ENCODE measurements at regions of chr1 and their contacts with region 1.

Region 1: DNA sequence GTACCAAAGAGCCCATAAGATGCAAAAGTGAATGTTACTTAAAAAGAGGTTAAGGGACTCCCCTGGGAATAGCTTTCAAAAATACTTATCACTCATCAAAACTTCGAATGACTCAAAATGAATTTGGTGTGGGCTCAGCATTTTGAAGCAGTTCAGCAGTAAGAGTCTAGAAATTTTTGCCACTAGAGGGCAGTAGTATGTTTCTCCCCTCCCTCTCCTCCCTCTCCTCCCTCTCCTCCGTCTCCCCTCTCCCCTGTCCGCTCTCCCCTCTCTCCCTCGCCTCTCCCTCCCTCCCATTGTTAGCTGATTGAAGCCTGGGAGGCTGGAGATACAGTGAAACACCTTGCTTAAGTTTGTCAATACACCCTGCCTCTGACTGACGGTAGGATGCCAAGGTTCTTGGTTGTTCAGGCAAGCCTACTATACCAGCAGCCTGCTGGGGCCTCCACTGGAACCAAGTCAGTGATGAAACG is 70.8 kb upstream of the TENT5C start:
- DNase-seq: peak; percentile 48
- ATAC-seq: peak; percentile 81
- H3K4me3 Mint-ChIP-seq: no peak overlapping the region
- H3K27ac Mint-ChIP-seq: no peak overlapping the region
- H3K4me1 Mint-ChIP-seq: peaks cover 25% of the 10 kb centered on the region
- H3K27me3 Mint-ChIP-seq: peaks cover 2% of the 10 kb centered on the region

Region 2: DNA sequence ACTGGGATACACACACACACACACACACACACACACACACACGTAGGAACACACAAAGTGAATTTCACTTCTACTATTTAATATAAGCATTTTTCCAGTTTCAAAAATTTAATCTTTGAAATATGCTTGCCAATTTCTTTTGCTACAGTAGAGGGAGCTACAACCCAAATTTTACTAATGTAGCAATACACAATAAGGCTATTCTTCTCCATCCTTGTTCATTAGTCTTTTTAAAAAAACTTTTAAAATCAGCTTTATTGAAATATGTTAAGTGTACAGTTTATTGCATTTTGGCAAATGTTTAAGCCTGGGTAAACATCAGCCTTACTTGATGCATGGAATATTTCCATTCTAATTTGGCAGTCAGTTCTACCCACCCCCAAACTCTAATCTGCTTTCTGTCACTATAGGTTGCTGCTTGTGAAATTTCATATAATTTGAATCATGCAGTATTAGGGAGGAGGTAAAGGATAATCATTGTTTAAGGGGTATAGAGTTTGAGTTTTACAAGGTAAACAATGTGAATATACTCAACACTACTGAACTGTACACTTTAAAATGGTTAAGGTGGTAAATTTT is 22.2 kb before region 1 on chr1:
- CTCF ChIA-PET with region 1: interaction called, 52 read pairs
- POLR2A ChIA-PET with region 1: no interaction called
- intact Hi-C with region 1: no loop called
- DNase-seq: no peak
- ATAC-seq: no peak
- H3K4me3 Mint-ChIP-seq: no peak overlapping the region
- H3K27ac Mint-ChIP-seq: no peak overlapping the region
- H3K4me1 Mint-ChIP-seq: peaks cover 3% of the 10 kb centered on the region
- H3K27me3 Mint-ChIP-seq: no peaks in the 10 kb centered on the region

Region 3: DNA sequence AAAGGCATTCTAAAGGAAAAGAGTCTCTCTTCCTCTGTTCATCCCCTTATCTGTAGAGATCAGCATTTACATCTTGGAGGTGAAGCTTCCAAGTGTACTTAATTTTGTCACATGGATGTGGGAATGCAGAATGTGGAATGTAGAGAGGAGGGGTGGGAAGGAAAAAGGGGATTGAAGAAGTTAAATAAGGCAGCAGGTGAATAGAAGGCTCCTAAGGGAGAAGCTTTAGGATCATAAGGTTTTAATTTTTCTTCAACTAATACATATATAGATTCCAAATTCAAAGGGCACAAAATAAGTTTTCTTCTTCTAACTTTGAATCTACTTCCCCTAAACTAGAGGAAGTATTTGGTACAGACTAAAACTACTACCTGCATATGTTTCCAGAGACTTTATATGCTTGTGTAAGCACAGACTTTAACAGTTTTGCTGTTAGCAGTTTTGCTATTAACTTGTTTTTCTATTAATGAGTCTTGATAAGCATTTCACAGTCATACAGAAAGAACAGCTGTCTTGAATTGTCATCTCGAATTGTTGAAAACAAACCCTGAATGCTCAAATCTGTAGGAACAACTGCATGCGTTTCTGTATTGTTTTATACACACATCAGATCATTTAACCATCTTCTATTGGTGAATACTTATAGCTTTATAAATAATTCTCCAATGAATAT is 83.6 kb after region 1 on chr1:
- CTCF ChIA-PET with region 1: interaction called, 4 read pairs
- POLR2A ChIA-PET with region 1: interaction called, 14 read pairs
- intact Hi-C with region 1: no loop called
- DNase-seq: no peak
- ATAC-seq: peak; percentile 65
- H3K4me3 Mint-ChIP-seq: no peak overlapping the region
- H3K27ac Mint-ChIP-seq: peak overlapping the region; percentile 10
- H3K4me1 Mint-ChIP-seq: peaks cover 60% of the 10 kb centered on the region
- H3K27me3 Mint-ChIP-seq: peaks cover 3% of the 10 kb centered on the region

Region 4: GRCh38 chr1:117654493-117655219 is 119.6 kb after region 1 on chr1:
- CTCF ChIA-PET with region 1: interaction called, 21 read pairs
- POLR2A ChIA-PET with region 1: interaction called, 6 read pairs
- intact Hi-C with region 1: no loop called
- DNase-seq: no peak
- ATAC-seq: peak; percentile 34
- H3K4me3 Mint-ChIP-seq: peak overlapping the region; percentile 16
- H3K27ac Mint-ChIP-seq: peak overlapping the region; percentile 79
- H3K4me1 Mint-ChIP-seq: peaks cover 78% of the 10 kb centered on the region
- H3K27me3 Mint-ChIP-seq: peaks cover 18% of the 10 kb centered on the region

Region 5: GRCh38 chr1:117674521-117675397 is 139.7 kb after region 1 on chr1:
- CTCF ChIA-PET with region 1: interaction called, 19 read pairs
- POLR2A ChIA-PET with region 1: no interaction called
- intact Hi-C with region 1: loop called in 1 of 2 experiments (anchors 2 kb)
- DNase-seq: peak; percentile 67
- ATAC-seq: peak; percentile 72
- H3K4me3 Mint-ChIP-seq: no peak overlapping the region
- H3K27ac Mint-ChIP-seq: no peak overlapping the region
- H3K4me1 Mint-ChIP-seq: peaks cover 16% of the 10 kb centered on the region
- H3K27me3 Mint-ChIP-seq: no peaks in the 10 kb centered on the region

Region 6: GRCh38 chr1:117735045-117735992 is 200.3 kb after region 1 on chr1:
- CTCF ChIA-PET with region 1: interaction called, 4 read pairs
- POLR2A ChIA-PET with region 1: no interaction called
- intact Hi-C with region 1: loop called in 1 of 2 experiments (anchors 5 kb)
- DNase-seq: peak; percentile 51
- ATAC-seq: peak; percentile 74
- H3K4me3 Mint-ChIP-seq: peak overlapping the region; percentile 54
- H3K27ac Mint-ChIP-seq: peak overlapping the region; percentile 93
- H3K4me1 Mint-ChIP-seq: peaks cover 4% of the 10 kb centered on the region
- H3K27me3 Mint-ChIP-seq: no peaks in the 10 kb centered on the region

Region 7: GRCh38 chr1:117895482-117896114 is 360.6 kb after region 1 on chr1:
- CTCF ChIA-PET with region 1: interaction called, 25 read pairs
- POLR2A ChIA-PET with region 1: no interaction called
- intact Hi-C with region 1: loop called in 1 of 2 experiments (anchors 1 kb)
- DNase-seq: peak; percentile 77
- ATAC-seq: peak; percentile 91
- H3K4me3 Mint-ChIP-seq: no peak overlapping the region
- H3K27ac Mint-ChIP-seq: no peak overlapping the region
- H3K4me1 Mint-ChIP-seq: peaks cover 4% of the 10 kb centered on the region
- H3K27me3 Mint-ChIP-seq: no peaks in the 10 kb centered on the region